Panc1 (cell line): ENCODE measurements at regions of chr1 and their contacts with region 1.

Region 1: GRCh38 chr1:193283016-193283415 is 96.6 kb upstream of the B3GALT2 start:
- DNase-seq: no peak
- ATAC-seq: no peak
- H3K4me3 ChIP-seq: no peak overlapping the region
- H3K27ac ChIP-seq: no peak overlapping the region
- H3K4me1 ChIP-seq: no peaks in the 10 kb centered on the region
- H3K27me3 ChIP-seq: no peaks in the 10 kb centered on the region
- CTCF ChIP-seq: no peak

Region 2: GRCh38 chr1:193143285-193143684 is 139.7 kb before region 1 on chr1:
- CTCF ChIA-PET with region 1: no interaction called
- POLR2A ChIA-PET with region 1: no interaction called
- in situ Hi-C with region 1: no loop called
- intact Hi-C with region 1: no loop called
- DNase-seq: no peak
- ATAC-seq: no peak
- H3K4me3 ChIP-seq: no peak overlapping the region
- H3K27ac ChIP-seq: no peak overlapping the region
- H3K4me1 ChIP-seq: no peaks in the 10 kb centered on the region
- H3K27me3 ChIP-seq: no peaks in the 10 kb centered on the region
- CTCF ChIP-seq: peak; percentile 27; the same call in 1 of the 2 replicates

Region 3: GRCh38 chr1:193311226-193311948 is 28.4 kb after region 1 on chr1:
- CTCF ChIA-PET with region 1: no interaction called
- POLR2A ChIA-PET with region 1: no interaction called
- in situ Hi-C with region 1: no loop called
- intact Hi-C with region 1: no loop called
- DNase-seq: no peak
- ATAC-seq: no peak
- H3K4me3 ChIP-seq: no peak overlapping the region
- H3K27ac ChIP-seq: no peak overlapping the region
- H3K4me1 ChIP-seq: no peaks in the 10 kb centered on the region
- H3K27me3 ChIP-seq: no peaks in the 10 kb centered on the region
- CTCF ChIP-seq: no peak

Region 4: DNA sequence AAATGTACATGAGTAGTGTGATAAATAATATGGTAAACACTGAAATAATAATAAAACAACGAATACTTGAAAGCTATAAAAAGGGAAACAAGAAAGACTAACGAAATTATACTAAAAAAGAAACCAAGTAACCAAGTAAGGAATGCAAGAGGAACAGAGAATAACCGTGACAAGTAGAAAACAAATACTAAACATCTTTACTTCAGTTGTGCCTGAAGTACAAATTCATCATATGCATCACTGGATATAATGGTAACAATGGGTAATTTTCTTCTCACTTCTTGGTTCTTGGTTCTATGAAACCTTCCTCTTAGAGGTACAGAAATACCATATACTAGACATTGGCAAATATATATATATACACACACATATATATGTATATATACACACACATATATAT is 997.0 kb after region 1 on chr1:
- CTCF ChIA-PET with region 1: no interaction called
- POLR2A ChIA-PET with region 1: interaction called, 13 read pairs
- in situ Hi-C with region 1: no loop called
- intact Hi-C with region 1: no loop called
- DNase-seq: no peak
- ATAC-seq: no peak
- H3K4me3 ChIP-seq: no peak overlapping the region
- H3K27ac ChIP-seq: no peak overlapping the region
- H3K4me1 ChIP-seq: no peaks in the 10 kb centered on the region
- H3K27me3 ChIP-seq: no peaks in the 10 kb centered on the region
- CTCF ChIP-seq: no peak